ENCODE measurements at regions of chr6 and their contacts with region 1.

Region 1: DNA sequence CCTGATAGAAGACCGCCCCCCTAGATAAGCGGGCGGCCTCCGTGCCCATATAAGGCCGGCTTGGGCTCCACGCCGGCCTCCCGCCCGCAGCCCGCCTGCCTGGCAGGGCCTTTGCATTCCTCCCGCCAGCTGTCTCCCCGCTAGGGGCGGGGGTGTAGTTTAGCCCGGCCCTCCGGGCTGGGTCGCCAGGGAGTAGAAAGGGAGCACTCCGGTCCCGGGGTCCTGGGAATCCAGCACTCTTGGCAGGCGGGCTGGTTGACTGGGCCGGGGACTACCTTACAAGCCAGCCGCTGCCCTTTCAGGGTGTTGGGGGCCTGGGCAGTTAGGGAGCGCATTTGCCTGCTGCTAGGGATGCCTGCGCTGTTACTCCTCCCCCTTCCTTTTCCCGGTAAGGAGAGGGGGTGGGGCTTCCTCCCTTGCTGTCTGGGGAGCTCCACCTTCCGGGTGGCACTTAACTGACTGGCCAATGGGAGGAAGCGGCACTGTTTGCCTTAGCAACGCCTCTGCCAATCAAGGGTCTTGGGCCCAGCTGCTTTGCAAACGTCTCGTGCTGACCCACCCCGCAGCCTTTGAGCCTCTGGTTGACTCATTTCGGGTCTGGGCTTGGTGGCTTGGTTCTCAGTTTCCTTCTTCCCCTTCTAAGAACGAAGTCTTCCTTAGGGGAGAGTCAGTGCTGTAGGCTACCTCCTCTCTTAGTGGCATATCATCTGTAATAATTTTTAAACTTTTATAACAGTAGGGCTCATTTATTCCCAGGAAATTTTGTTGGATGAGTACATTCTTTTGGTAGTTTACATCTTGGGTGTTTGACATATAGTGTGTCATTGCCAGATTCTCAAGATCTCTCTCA is 3.4 kb downstream of the SRF start:
- DNase-seq: peak; percentile 99
- H3K4me3 Mint-ChIP-seq: peak overlapping the region; percentile 90
- H3K27ac Mint-ChIP-seq: peak overlapping the region; percentile 80
- H3K4me1 Mint-ChIP-seq: peaks cover 36% of the 10 kb centered on the region
- H3K27me3 Mint-ChIP-seq: no peaks in the 10 kb centered on the region

Region 2: DNA sequence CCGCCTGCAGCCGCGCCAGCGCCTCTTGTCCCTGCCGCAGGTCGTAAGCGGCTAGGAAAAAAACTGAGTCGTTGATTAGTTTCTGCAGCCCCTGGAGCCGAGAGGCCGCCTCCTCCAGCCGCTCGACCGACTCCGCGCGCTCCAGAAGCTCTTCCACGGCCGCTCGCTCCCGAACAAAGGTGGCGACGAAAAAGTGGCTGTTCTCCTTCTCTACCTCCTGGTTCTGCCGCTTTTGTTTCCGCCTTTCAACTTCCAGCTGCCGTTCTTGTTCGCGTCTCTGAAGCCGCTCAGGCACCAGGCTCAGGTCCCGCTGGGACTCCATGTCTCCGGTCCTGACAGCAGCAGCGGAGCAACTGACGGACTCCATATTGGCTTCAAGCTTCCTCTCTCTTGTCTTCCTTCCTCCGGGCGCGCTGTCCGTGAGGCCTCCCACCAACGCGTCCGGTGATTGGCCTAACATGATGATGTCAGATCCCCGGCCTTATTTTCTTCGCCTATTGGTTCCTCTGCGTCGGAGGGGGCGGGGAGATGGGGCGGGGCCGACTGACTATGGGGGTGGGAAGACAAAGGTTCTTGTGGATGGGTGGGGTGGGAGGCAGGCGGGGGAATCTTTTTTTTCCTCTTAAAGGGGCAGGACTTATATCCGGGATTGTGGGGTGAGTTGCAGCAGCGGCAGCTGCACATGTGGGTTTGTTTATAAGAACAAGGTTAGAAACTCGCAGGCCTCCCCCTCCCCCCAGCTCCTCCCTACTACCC is 428.6 kb before region 1 on chr6 and contains the start of gene TBCC:
- CTCF ChIA-PET with region 1: no interaction called
- intact Hi-C with region 1: loop called (anchors 1 kb)
- DNase-seq: peak; percentile 98
- H3K4me3 Mint-ChIP-seq: peak within 1 kb of the TSS; percentile 100
- H3K27ac Mint-ChIP-seq: peak within 1 kb of the TSS; percentile 99
- H3K4me1 Mint-ChIP-seq: peaks cover 25% of the 10 kb centered on the region
- H3K27me3 Mint-ChIP-seq: no peaks in the 10 kb centered on the region
- total RNA-seq, gene TBCC: 12.6 to 12.9 TPM

Region 3: DNA sequence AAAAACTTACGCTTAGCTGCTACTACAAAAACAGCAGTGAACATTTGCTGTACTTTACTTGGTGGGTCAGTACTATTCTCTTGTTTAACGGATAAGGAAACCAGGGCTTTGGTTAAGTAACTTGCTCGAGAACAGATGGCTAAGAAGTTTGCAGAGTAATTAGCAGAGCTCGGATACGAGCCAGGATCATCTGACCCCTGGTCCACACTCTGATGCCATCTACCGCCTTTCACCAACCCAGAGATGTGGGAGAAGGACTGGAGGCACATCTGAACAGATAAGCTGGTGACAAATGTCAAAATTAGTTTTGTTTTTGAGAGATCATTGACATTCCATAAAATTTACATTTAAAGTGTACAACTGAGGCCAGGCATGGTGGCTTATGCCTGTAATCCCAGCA is 314.0 kb before region 1 on chr6:
- CTCF ChIA-PET with region 1: no interaction called
- intact Hi-C with region 1: no loop called
- DNase-seq: no peak
- H3K4me3 Mint-ChIP-seq: no peak overlapping the region
- H3K27ac Mint-ChIP-seq: no peak overlapping the region
- H3K4me1 Mint-ChIP-seq: no peaks in the 10 kb centered on the region
- H3K27me3 Mint-ChIP-seq: no peaks in the 10 kb centered on the region

Region 4: DNA sequence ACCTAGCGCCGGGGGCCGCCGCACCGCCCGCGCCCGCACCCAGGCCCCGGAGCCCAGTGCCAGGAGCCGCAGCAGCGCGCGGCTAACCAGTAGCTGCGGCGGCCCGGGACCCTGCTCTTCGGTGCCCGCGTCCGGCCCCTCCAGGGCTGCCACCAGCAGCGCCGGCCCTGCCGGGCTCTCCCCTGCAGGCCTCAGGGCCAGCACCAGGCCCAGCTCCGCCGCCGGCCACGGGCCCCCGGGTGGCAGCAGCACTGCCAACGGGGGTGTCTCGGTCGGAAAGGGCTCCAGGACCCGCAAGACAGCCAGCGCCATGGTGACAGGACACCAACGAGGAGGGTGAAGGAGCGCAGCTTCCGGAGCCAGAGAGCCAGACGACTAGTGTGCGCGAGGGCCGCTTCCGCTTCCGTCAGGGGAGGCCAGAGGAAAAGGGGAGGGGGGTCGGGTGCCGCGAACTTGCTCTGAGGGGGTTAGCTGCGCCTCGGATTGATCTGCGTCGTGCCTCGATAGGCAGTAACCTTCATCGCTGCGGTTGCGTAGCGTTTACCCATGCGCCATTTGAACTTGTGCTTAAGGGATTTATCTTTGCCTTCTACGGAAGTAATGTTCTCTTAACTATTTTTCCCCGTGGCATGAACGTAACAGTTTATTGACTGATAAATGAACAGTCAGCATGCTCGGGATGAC is 195.5 kb before region 1 on chr6 and contains the start of gene PEX6:
- CTCF ChIA-PET with region 1: no interaction called
- intact Hi-C with region 1: loop called (anchors 1 kb)
- DNase-seq: peak; percentile 97
- H3K4me3 Mint-ChIP-seq: peak within 1 kb of the TSS; percentile 95
- H3K27ac Mint-ChIP-seq: peak within 1 kb of the TSS; percentile 99
- H3K4me1 Mint-ChIP-seq: peaks cover 53% of the 10 kb centered on the region
- H3K27me3 Mint-ChIP-seq: no peaks in the 10 kb centered on the region
- total RNA-seq, gene PEX6: 17.1 to 18.2 TPM

Region 5: DNA sequence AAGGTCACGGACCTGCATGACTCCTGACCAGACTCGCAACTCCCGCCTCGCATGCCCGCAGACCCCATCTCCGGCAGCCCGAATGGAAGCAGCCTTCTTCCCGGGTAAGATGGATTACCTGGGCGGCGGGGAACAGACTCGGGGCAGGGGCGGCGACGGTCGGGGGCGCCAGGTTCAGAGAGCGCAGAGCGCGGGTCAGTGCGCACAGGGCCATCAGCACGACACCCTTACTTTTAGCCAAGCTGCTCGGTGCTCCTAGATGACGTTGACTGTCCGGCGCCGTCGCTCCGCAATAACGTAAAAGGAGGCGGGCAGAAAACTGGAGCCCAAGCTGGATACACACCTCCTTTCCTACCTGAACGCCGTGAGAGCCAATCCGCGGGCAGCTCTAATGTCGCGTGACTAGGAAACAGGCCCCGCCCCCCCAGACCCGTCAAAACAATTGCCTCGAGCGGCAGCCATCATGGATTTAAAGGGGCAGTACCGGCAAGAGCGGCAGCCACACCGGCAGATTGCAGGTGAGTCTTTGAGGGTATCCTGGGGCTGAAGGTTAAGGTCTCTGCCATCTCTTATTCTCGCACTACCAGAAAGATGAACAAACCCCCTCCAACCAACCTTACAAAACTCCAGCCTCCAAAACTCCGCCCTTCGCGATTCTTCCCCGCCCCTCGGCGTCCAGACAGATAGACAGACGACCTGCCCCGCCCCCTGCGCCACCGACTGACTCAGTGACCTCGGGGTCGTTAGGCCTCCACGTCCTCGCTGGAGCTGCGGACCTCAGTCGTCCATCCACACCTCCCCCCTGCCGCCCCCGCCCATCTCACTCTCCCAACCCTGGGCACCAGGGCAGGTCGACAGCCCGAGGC is 115.1 kb before region 1 on chr6 and contains the starts of genes KLC4 and MRPL2:
- CTCF ChIA-PET with region 1: no interaction called
- intact Hi-C with region 1: loop called (anchors 1 kb)
- DNase-seq: peak; percentile 99
- H3K4me3 Mint-ChIP-seq: peak within 1 kb of the TSS; percentile 86
- H3K27ac Mint-ChIP-seq: peak within 1 kb of the TSS; percentile 93
- H3K4me1 Mint-ChIP-seq: peaks cover 29% of the 10 kb centered on the region
- H3K27me3 Mint-ChIP-seq: no peaks in the 10 kb centered on the region
- total RNA-seq, gene KLC4: 12.0 to 12.3 TPM
- total RNA-seq, gene MRPL2: 87.7 to 95.1 TPM

Region 6: GRCh38 chr6:43247113-43247999 is 72.9 kb after region 1 on chr6:
- CTCF ChIA-PET with region 1: no interaction called
- intact Hi-C with region 1: loop called (anchors 2 kb)
- DNase-seq: peak; percentile 87
- H3K4me3 Mint-ChIP-seq: peak overlapping the region; percentile 73
- H3K27ac Mint-ChIP-seq: peak overlapping the region; percentile 76
- H3K4me1 Mint-ChIP-seq: peaks cover 21% of the 10 kb centered on the region
- H3K27me3 Mint-ChIP-seq: peaks cover 14% of the 10 kb centered on the region

Region 7: DNA sequence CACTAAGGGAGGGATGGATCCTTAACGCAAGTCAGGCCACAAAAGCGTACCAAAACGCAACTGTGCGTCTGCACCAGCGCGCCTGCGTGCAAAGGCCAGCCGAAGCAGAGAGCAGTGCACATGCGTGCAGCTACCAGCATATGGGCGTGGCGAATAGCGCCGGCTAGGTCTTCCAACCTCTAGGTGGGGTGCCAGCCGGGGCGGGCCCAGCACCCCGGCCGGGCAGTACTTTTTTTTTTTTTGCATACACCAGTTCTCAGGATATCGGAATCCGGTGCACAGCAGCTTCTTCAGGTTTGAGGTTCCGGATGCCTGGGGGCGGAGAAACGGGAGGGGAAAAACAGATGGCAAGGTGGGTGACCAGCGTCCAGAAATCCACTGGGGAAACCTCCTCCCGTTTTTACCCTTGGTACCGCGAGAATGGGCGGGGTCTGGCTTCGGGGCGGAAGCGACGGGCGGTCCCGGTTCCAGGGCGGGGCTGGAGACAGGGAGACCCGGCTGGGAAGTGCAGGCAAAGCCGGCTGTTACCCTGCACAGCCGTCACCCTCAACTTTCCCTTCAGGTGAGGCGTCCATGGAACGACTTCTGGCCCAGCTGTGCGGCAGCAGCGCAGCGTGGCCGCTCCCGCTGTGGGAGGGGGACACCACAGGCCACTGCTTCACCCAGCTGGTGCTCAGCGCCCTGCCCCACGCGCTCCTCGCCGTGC is 253.1 kb after region 1 on chr6 and contains the start of gene ABCC10:
- CTCF ChIA-PET with region 1: no interaction called
- intact Hi-C with region 1: loop called (anchors 1 kb)
- DNase-seq: peak; percentile 97
- H3K4me3 Mint-ChIP-seq: peak within 1 kb of the TSS; percentile 87
- H3K27ac Mint-ChIP-seq: peak within 1 kb of the TSS; percentile 86
- H3K4me1 Mint-ChIP-seq: peaks cover 21% of the 10 kb centered on the region
- H3K27me3 Mint-ChIP-seq: no peaks in the 10 kb centered on the region
- total RNA-seq, gene ABCC10: 22.7 to 26.6 TPM

Region 8: DNA sequence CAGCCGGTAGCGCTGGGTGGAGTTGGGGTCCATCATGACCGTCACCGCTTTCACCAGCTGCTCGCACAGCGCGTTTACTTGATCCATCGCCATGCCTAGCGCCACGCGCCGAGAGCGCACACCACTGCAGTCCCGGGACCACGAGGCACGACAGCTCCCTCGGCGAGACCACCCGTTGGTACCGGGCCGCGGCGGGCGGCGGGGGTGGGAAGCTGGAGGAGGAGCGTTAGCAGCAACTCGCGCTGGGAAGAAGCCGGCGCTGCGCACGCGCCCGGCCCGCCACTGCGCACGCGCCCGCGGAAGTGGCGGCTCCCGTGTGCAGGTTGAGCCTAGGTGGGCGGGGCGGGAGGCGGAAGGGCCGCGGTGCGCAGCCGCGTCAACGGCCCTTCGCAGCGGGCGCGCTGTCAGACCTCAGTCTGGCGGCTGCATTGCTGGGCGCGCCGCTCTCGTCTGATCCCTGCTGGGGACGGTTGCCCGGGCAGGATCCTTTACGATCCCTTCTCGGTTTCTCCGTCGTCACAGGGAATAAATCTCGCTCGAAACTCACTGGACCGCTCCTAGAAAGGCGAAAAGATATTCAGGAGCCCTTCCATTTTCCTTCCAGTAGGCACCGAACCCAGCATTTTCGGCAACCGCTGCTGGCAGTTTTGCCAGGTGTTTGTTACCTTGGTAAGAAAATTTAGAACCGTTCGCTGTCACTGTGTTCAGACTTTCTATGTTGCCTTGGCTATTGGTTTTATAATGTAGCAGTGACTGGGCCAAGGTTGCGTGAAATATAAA is 401.5 kb after region 1 on chr6 and contains the starts of genes POLH and XPO5:
- CTCF ChIA-PET with region 1: no interaction called
- intact Hi-C with region 1: loop called (anchors 5 kb)
- DNase-seq: peak; percentile 92
- H3K4me3 Mint-ChIP-seq: peak within 1 kb of the TSS; percentile 93
- H3K27ac Mint-ChIP-seq: peak within 1 kb of the TSS; percentile 87
- H3K4me1 Mint-ChIP-seq: peaks cover 48% of the 10 kb centered on the region
- H3K27me3 Mint-ChIP-seq: no peaks in the 10 kb centered on the region
- total RNA-seq, gene POLH: 63.3 to 68.6 TPM
- total RNA-seq, gene XPO5: 74.9 to 93.2 TPM